Adrenal gland (tissue), 19 donors: ENCODE measurements at regions of chr13 and their contacts with region 1.

Region 1: DNA sequence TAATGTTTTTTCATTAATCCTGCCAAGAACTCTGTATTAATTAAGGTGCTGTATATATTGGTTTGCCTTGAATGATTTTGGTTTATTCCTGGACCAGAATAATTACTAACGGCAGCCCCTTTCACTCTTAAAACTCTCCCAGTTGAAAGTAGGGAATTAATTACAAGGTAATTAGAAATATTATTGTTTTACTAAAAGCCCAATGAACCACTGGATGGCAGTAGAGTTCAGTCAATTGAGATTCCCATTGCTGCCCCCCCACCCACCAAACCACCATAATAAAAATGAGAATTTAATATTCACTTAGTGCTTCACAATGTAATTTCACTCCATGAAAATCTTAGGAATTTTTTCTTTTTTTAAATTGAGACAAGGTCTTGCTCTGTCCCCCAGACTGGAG is 13.7 kb downstream of the WBP4 start:
- DNase-seq: peak in 2 of 7 donors; percentile 48 to 54
- H3K4me3 ChIP-seq: no peak overlapping the region
- H3K27ac ChIP-seq: no peak overlapping the region
- H3K4me1 ChIP-seq: no peaks in the 10 kb centered on the region
- H3K27me3 ChIP-seq: no peaks in the 10 kb centered on the region
- CTCF ChIP-seq: peak; percentile 41 to 68 (median 60)
- POLR2A ChIP-seq: no peak

Region 2: GRCh38 chr13:41222259-41222852 is 147.3 kb after region 1 on chr13:
- intact Hi-C with region 1: loop called in 1 of 2 experiments (anchors 5 kb)
- DNase-seq: peak; percentile 28 to 77 (median 46)
- H3K4me3 ChIP-seq: no peak overlapping the region
- H3K27ac ChIP-seq: no peak overlapping the region
- H3K4me1 ChIP-seq: no peaks in the 10 kb centered on the region
- H3K27me3 ChIP-seq: no peaks in the 10 kb centered on the region
- CTCF ChIP-seq: peak; percentile 60 to 82 (median 78)
- POLR2A ChIP-seq: no peak

Region 3: GRCh38 chr13:41231786-41232185 is 156.8 kb after region 1 on chr13:
- intact Hi-C with region 1: loop called in 1 of 2 experiments (anchors 10 kb)
- DNase-seq: peak in 6 of 7 donors; percentile 33 to 62 (median 42)
- H3K4me3 ChIP-seq: no peak overlapping the region
- H3K27ac ChIP-seq: no peak overlapping the region
- H3K4me1 ChIP-seq: peaks cover 0 to 3% of the 10 kb centered on the region in 2 donors
- H3K27me3 ChIP-seq: no peaks in the 10 kb centered on the region
- CTCF ChIP-seq: no peak
- POLR2A ChIP-seq: no peak